ENCODE measurements at regions of chr19 and their contacts with region 1.

Region 1: DNA sequence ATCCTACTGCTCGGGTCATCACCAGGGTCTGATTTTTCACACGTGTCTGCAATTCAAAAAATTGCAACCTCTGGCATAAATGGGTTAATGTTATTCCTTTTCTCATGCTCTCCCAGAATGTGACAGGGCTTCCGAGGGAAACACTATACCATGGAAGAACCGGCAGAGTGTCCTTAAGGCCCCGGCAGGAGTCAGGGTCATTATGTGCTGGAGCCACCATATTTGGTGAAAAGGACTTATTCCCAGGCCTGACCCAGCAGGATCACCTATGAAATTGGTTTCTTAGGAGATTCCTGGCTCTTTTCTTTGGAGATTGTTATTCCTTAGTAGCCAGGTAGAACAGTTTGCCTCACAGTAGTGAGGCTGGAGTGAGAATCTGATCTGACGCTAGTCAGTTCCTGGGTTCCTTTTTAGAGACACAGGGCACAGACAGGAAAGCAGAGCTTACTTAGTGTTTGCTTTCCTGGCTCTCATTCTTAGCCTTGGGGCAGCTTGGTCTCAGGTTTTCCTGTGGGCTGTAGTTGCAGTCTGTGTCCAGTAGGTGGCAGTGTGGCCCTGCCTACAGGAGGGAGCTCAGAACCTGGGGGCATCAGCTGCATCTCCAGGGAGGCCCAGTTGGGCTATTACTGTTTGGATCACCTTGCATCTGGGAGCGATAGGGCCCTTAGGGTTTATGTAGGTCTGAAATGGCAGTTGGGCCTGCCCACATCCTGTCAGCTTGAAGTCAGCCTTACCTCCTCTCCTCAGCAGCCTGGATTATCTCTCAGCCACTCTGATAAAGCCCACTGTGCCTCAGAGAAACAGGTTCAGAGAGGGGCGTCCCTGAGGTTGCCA is 12.4 kb downstream of the SNRNP70 start:
- DNase-seq: peak; percentile 90
- H3K4me3 ChIP-seq: no peak overlapping the region
- H3K27ac ChIP-seq: no peak overlapping the region
- H3K4me1 ChIP-seq: peaks cover 7% of the 10 kb centered on the region
- H3K27me3 ChIP-seq: no peaks in the 10 kb centered on the region
- CTCF ChIP-seq: peak; percentile 99

Region 2: GRCh38 chr19:49113762-49114629 is 16.3 kb after region 1 on chr19 and contains the start of gene LIN7B:
- CTCF ChIA-PET with region 1: interaction called, 16 read pairs
- POLR2A ChIA-PET with region 1: no interaction called
- intact Hi-C with region 1: no loop called
- DNase-seq: peak; percentile 84
- H3K4me3 ChIP-seq: peak within 1 kb of the TSS; percentile 78
- H3K27ac ChIP-seq: peak within 1 kb of the TSS; percentile 85
- H3K4me1 ChIP-seq: peaks cover 13% of the 10 kb centered on the region
- H3K27me3 ChIP-seq: no peaks in the 10 kb centered on the region
- CTCF ChIP-seq: peak; percentile 32; the same call in 1 of the 2 replicates
- total RNA-seq, gene LIN7B: 19.9 and 24.3 TPM in 2 replicates

Region 3: DNA sequence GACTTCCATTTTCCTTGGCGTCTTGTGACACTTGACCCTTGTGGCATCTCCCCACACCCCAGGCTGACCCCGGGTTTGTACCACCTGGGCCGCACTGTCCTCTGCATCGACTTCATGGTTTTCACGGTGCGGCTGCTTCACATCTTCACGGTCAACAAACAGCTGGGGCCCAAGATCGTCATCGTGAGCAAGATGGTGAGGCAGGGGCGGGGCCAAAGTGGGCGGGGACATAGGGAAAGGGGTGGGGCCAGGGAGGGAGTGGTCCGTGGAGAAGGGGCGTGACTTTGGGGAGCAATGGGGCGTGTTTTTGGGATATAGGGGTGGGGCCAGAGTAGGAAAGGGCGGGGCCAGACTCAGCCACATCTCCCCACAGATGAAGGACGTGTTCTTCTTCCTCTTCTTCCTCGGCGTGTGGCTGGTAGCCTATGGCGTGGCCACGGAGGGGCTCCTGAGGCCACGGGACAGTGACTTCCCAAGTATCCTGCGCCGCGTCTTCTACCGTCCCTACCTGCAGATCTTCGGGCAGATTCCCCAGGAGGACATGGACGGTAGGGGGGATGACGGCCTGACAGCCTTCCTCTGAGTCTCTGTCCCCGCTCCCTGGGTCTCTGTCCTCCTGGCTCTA is 102.7 kb after region 1 on chr19:
- CTCF ChIA-PET with region 1: interaction called, 43 read pairs
- POLR2A ChIA-PET with region 1: interaction called, 21 read pairs
- intact Hi-C with region 1: loop called (anchors 5 kb)
- DNase-seq: peak; percentile 53
- H3K4me3 ChIP-seq: no peak overlapping the region
- H3K27ac ChIP-seq: no peak overlapping the region
- H3K4me1 ChIP-seq: peaks cover 25% of the 10 kb centered on the region
- H3K27me3 ChIP-seq: no peaks in the 10 kb centered on the region
- CTCF ChIP-seq: no peak

Region 4: DNA sequence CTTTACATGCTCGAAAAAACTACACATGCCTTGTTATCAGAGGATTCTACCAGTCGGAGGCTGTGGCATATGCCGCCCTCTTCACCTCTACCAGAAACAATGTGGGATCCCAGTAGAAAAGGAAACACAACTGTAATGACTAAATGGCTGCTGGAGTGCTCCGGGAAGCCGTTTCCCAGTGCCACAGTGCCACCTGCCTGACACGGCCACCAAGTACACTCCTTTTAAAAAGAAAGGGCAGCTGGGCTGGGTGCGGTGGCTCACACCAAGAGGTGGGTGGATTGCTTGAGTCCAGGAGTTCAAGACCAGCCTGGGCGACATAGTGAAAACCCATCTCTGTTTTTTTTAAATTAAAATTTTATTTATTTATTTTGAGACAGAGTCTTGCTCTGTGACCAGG is 127.2 kb after region 1 on chr19:
- CTCF ChIA-PET with region 1: interaction called, 22 read pairs
- POLR2A ChIA-PET with region 1: no interaction called
- intact Hi-C with region 1: loop called (anchors 2 kb)
- DNase-seq: peak; percentile 91
- H3K4me3 ChIP-seq: no peak overlapping the region
- H3K27ac ChIP-seq: peak overlapping the region; percentile 22
- H3K4me1 ChIP-seq: peaks cover 25% of the 10 kb centered on the region
- H3K27me3 ChIP-seq: no peaks in the 10 kb centered on the region
- CTCF ChIP-seq: peak; percentile 82

Region 5: DNA sequence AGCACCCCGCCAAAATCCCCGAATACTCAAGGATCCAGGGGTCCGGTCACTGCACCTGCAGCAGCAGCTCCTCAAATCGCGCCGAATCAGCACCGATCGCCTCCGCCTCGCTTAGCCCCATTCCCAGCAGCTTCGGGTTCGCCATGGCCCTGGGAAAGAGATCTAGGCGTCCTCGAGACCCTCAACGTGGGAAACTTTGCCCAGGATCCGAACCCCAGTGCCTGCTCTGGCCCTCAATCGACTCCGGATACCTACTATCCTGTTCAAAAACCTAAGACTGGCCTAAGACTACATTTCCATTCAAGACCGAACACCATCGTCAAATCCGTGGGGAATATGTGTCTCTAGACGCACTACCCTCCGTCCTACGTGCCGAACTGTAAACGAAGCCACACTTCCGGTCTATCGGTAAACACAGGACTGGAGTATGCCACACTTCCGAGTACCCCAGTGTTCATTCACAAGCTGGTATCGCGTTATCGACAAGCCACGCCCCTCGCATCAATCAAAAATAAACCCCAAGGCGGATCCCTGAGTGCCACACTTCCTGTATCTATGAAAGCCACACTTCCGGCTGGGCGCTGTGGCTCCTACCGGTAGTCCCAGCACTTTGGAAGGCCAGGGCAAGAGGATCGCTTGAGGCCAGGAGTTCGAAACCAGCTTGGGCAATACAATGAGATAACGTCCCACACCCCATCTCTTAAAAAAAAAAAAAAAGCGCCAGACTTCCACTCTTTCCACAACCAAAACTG is 353.9 kb after region 1 on chr19 and contains the start of gene PIH1D1:
- CTCF ChIA-PET with region 1: no interaction called
- POLR2A ChIA-PET with region 1: interaction called, 10 read pairs
- intact Hi-C with region 1: no loop called
- DNase-seq: peak; percentile 100
- H3K4me3 ChIP-seq: peak within 1 kb of the TSS; percentile 98
- H3K27ac ChIP-seq: peak within 1 kb of the TSS; percentile 94
- H3K4me1 ChIP-seq: peaks cover 34% of the 10 kb centered on the region
- H3K27me3 ChIP-seq: no peaks in the 10 kb centered on the region
- CTCF ChIP-seq: no peak
- total RNA-seq, gene PIH1D1: 122 and 131 TPM in 2 replicates

Region 6: DNA sequence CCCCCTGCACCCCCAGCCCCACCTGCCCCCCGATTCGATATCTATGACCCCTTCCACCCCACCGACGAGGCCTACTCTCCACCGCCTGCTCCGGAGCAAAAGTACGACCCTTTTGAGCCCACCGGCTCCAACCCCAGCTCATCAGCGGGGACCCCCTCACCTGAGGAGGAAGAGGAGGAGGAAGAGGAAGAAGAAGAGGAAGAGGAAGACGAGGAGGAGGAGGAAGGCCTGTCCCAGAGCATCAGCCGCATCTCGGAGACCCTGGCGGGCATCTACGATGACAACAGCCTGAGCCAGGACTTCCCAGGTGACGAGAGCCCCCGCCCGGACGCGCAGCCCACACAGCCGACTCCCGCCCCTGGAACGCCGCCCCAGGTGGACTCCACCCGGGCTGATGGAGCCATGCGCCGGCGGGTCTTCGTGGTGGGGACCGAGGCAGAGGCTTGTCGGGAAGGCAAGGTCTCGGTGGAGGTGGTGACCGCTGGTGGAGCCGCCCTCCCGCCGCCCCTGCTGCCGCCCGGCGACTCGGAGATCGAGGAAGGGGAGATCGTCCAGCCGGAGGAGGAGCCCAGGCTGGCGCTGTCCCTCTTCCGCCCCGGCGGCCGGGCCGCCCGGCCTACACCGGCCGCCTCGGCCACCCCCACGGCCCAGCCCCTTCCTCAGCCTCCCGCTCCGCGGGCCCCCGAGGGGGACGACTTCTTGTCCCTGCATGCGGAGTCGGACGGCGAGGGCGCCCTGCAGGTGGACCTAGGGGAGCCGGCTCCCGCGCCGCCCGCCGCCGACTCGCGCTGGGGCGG is 553.6 kb after region 1 on chr19:
- CTCF ChIA-PET with region 1: no interaction called
- POLR2A ChIA-PET with region 1: no interaction called
- intact Hi-C with region 1: no loop called
- DNase-seq: no peak
- H3K4me3 ChIP-seq: no peak overlapping the region
- H3K27ac ChIP-seq: no peak overlapping the region
- H3K4me1 ChIP-seq: no peaks in the 10 kb centered on the region
- H3K27me3 ChIP-seq: no peaks in the 10 kb centered on the region
- CTCF ChIP-seq: no peak

Measured in A673 (cell line).